Caco-2 (cell line): ENCODE measurements at regions of chr20 and their contacts with region 1.

Region 1: DNA sequence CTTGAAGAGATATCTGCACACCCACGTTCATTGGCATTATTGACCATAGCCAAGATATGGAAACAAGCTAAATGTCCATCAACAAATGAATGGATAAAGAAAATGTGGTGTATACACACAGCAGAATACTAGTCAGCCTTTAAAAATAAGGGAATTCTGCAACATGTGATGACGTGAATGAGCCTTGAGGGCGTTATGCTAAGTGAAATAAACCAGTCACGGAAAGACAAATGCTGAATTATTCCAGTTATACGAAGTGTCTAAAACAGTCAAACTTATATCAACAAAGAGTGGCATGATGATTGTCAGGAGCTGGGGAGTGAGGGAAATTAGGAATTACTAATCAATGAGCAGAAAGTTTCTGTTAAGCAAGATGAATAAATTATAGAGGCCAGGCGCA is 8.4 kb upstream of the DEFB121 start:
- DNase-seq: no peak
- H3K4me3 ChIP-seq: no peak overlapping the region
- H3K4me3 Mint-ChIP-seq: no peak overlapping the region
- H3K27ac Mint-ChIP-seq: no peak overlapping the region
- H3K4me1 ChIP-seq: no peaks in the 10 kb centered on the region
- H3K4me1 Mint-ChIP-seq: no peaks in the 10 kb centered on the region
- H3K27me3 ChIP-seq: no peaks in the 10 kb centered on the region
- H3K27me3 Mint-ChIP-seq: peaks cover 22% of the 10 kb centered on the region
- CTCF ChIP-seq: no peak

Region 2: GRCh38 chr20:31390490-31390889 is 23.9 kb before region 1 on chr20 and contains the start of gene DEFB119:
- CTCF ChIA-PET with region 1: no interaction called
- POLR2A ChIA-PET with region 1: no interaction called
- intact Hi-C with region 1: no loop called
- DNase-seq: no peak
- H3K4me3 ChIP-seq: no peak within 1 kb of the TSS
- H3K4me3 Mint-ChIP-seq: no peak within 1 kb of the TSS
- H3K27ac Mint-ChIP-seq: no peak within 1 kb of the TSS
- H3K4me1 ChIP-seq: no peaks in the 10 kb centered on the region
- H3K4me1 Mint-ChIP-seq: no peaks in the 10 kb centered on the region
- H3K27me3 ChIP-seq: no peaks in the 10 kb centered on the region
- H3K27me3 Mint-ChIP-seq: peaks cover 24% of the 10 kb centered on the region
- CTCF ChIP-seq: no peak
- total RNA-seq, gene DEFB119: not detected in 2 replicates

Region 3: GRCh38 chr20:31454365-31454764 is 40.0 kb after region 1 on chr20:
- CTCF ChIA-PET with region 1: no interaction called
- POLR2A ChIA-PET with region 1: no interaction called
- intact Hi-C with region 1: loop called (anchors 1 kb)
- DNase-seq: no peak
- H3K4me3 ChIP-seq: no peak overlapping the region
- H3K4me3 Mint-ChIP-seq: no peak overlapping the region
- H3K27ac Mint-ChIP-seq: no peak overlapping the region
- H3K4me1 ChIP-seq: no peaks in the 10 kb centered on the region
- H3K4me1 Mint-ChIP-seq: no peaks in the 10 kb centered on the region
- H3K27me3 ChIP-seq: no peaks in the 10 kb centered on the region; the same call in 1 of the 2 replicates
- H3K27me3 Mint-ChIP-seq: peaks cover 8% of the 10 kb centered on the region
- CTCF ChIP-seq: no peak